ENCODE measurements at regions of chr3 and their contacts with region 1.

Region 1: GRCh38 chr3:3200632-3201212 is 21.2 kb upstream of the CRBN start:
- DNase-seq: peak in 38 of 42 donors; percentile 18 to 85 (median 56)

Region 2: DNA sequence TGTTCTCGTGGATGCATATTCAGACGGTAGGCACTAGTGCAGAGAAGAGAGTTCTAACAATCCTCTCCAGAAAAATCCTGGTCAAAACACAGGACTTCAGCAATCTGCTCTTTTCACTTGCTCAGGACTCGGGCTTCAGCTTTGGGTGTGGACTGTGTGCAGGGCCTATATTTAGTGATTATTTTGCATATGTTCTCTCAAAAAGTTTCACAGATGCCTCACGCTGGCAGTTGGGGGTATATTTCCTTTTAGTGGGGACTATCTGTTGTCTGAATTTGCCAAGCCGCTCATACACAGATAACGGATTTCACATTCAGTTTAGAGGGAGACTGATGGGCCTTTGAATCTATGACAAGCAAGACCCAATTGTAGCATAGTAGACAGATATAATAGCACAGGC is 544.1 kb after region 1 on chr3:
- intact Hi-C with region 1: no loop called
- DNase-seq: no peak

Region 3: GRCh38 chr3:3998140-3998922 is 797.6 kb after region 1 on chr3:
- intact Hi-C with region 1: loop called (anchors 10 kb)
- DNase-seq: peak in 19 of 42 donors; percentile 1 to 57 (median 19)

Region 4: DNA sequence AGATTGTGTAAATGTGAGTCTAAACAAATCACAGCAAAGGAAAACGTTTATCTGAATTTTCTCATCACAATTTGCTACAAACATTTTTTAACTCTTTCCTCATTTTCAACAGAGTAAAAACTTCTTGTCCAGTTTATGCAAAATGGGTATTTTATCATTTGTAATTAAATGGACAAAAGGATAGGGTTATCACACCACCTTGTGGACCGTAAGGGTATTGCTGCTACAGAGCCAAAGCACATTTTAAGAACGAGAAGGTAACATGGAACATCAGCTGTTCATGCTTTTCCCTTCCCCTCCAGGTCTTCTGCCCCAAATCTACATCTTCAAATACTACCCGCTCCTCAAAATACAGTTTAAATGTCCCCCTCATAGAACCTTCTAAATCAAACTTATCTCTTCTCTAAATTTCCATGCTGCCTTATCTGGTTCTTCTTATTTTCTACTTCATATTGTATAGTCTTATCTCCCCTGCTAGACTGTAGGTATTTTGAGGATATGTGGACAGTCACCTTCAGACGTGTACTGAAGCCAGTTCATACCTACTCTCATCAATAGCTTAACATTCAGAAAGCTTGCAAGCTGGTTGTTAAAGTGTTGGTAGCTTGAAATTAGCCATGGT is 1089.7 kb after region 1 on chr3:
- intact Hi-C with region 1: loop called (anchors 10 kb)
- DNase-seq: peak in 28 of 42 donors; percentile 15 to 86 (median 48)

Measured in head of caudate nucleus (tissue), 42 donors.